ENCODE measurements at regions of chr12 and their contacts with region 1.

Region 1: GRCh38 chr12:132614861-132615578 is 3.6 kb upstream of the P2RX2 start:
- DNase-seq: peak; percentile 95

Region 2: DNA sequence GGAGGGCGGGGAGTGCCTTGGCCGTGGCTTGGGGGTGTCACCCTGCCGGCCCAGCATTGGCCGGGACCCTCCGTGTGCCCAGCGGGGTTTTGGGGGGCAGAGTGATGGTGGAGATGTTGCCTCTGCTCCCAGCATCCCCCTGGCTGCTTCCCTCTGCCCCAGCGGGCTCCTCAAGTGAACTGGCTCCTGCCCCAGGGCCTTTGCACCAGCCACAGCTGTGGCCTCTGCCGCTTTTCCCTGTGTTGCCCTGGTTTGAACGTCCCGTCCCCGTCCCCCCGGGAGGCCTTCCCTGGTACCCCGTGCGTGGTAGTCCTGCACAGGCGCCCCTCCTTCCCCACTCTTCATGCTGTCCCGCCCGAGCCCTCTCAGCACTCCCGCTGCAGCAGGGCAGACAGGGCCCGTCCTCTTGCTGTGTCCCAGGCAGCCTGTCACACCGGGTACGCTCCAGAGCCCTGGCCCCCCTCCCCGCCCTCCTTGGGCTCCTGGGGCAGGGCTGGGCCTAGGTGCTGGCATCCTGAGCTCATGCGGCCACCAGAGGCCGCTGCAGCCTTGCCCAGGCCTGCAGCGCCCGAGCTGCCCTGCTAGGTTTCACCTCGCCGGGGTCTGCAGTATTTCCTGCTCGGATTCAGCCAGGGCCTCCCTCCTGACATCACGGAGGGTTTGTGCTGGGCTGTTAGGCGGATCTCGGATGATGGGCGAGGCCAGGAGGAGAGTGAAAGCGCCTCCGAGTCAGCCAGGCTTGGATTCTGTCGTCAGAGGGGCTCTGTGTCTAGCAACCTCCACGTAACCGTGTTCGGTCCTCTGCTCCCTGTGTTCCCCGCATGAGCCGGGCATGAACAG is 461.3 kb before region 1 on chr12:
- intact Hi-C with region 1: loop called in 1 of 2 experiments (anchors 10 kb)
- DNase-seq: peak; percentile 89